Left ventricle myocardium inferior (tissue), 1 donor: ENCODE measurements at regions of chr18 and their contacts with region 1.

Region 1: GRCh38 chr18:53701697-53702096 is 522.8 kb downstream of the MBD2 start:
- DNase-seq: no peak
- H3K4me3 ChIP-seq: no peak overlapping the region
- H3K27ac ChIP-seq: no peak overlapping the region
- H3K4me1 ChIP-seq: no peaks in the 10 kb centered on the region
- H3K27me3 ChIP-seq: no peaks in the 10 kb centered on the region
- CTCF ChIP-seq: no peak

Region 2: GRCh38 chr18:53864770-53865169 is 163.1 kb after region 1 on chr18:
- intact Hi-C with region 1: loop called (anchors 10 kb)
- DNase-seq: no peak
- H3K4me3 ChIP-seq: no peak overlapping the region
- H3K27ac ChIP-seq: no peak overlapping the region
- H3K4me1 ChIP-seq: no peaks in the 10 kb centered on the region
- H3K27me3 ChIP-seq: no peaks in the 10 kb centered on the region
- CTCF ChIP-seq: peak; percentile 13